ENCODE measurements at regions of chr7 and their contacts with region 1.

Region 1: DNA sequence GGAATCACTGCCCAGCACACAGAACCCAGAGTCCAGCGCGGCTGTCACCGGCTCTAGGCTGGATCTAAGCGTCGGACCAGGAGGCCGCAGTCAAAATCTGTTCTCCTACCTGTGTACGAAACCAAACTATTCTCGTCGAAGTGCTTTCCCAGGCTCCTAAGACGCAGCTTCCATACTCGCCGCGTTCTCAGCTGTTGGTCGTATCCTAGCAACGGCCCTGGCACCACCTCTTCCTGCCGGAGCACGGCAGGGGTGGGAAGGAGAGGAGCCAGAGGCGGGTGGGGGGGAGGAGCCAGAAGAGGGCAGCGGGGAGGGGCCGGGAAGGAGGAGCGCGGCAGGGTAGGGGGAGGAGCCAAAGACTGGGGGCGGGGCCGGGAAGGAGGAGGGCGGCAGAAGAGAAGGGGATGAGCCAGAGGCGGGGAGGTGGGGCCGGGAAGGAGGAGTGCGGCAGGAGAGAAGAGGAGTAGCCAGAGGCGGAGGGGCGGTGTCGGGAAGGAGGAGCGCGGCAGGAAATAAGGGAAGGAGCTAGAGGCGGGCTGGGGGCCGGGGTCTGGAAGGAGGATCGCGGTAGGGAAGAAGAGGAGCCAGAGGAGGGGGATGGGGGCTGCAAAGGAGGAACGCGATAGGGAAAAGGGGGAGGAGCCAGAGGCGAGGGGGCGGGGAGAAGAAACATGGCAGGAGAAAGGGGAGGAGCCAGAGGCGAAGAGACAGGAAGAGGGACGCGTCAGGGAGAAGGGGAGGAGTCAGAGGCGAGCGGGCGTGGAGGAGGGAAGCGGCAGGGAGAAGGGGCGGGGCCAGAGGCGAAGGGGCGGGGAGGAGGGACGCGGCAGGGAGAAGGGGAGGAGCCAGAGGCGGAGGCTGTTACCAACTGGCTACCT is at the start of gene IQUB:
- DNase-seq: peak; percentile 82 to 97
- H3K4me3 ChIP-seq: peak within 1 kb of the TSS; percentile 96
- H3K27ac ChIP-seq: no peak within 1 kb of the TSS
- H3K4me1 ChIP-seq: peaks cover 23% of the 10 kb centered on the region
- H3K27me3 ChIP-seq: no peaks in the 10 kb centered on the region
- CTCF ChIP-seq: no peak
- total RNA-seq, gene IQUB: 0.33 and 0.98 TPM in 2 replicates

Region 2: GRCh38 chr7:123154231-123154860 is 380.3 kb before region 1 on chr7:
- CTCF ChIA-PET with region 1: no interaction called
- POLR2A ChIA-PET with region 1: no interaction called
- intact Hi-C with region 1: loop called (anchors 10 kb)
- DNase-seq: peak; percentile 65 to 73
- H3K4me3 ChIP-seq: no peak overlapping the region
- H3K27ac ChIP-seq: no peak overlapping the region
- H3K4me1 ChIP-seq: no peaks in the 10 kb centered on the region
- H3K27me3 ChIP-seq: no peaks in the 10 kb centered on the region
- CTCF ChIP-seq: peak; percentile 84

Region 3: DNA sequence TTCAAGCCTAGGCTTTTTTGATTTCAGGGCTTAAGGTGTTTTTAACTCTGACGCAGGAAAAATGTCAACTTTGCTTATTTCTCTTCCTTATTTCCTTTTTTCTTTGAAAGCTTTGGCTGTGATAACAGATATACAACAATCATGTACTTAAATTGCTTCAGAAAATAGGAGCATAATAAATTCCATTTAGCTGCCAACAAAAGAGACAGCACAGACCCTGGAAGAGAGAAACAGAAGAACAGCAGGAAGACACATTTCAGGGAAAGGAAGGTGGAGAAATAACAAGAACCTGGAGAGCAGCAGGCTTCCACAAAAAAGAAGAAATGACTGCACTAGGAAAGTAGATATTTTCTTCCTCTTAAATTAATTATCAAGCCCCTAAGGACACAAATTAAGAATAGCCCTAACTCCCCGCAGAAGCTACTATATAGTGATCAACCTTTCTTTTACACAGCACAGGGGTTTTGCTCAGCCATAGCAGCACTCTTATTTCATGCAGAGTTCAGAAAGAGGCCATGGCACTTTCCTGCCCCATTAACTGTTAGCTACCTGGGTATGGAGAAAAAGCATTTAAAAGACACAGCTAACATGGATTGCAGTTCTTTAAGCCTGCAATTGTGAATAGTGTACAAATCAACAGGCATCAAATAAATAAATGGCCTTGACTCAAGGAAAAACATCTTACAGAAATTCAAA is 61.7 kb before region 1 on chr7:
- CTCF ChIA-PET with region 1: no interaction called
- POLR2A ChIA-PET with region 1: no interaction called
- intact Hi-C with region 1: no loop called
- DNase-seq: no peak
- H3K4me3 ChIP-seq: no peak overlapping the region
- H3K27ac ChIP-seq: no peak overlapping the region
- H3K4me1 ChIP-seq: 0 out of 2 replicates have a peak, but pooled peaks cover 4% of the 10 kb centered on the region
- H3K27me3 ChIP-seq: no peaks in the 10 kb centered on the region
- CTCF ChIP-seq: no peak

Region 4: GRCh38 chr7:123557398-123558288 is 23.0 kb after region 1 on chr7 and contains the start of gene NDUFA5:
- CTCF ChIA-PET with region 1: no interaction called
- POLR2A ChIA-PET with region 1: interaction called, 20 read pairs
- intact Hi-C with region 1: loop called (anchors 1 kb)
- DNase-seq: peak; percentile 91 to 98
- H3K4me3 ChIP-seq: peak within 1 kb of the TSS; percentile 82
- H3K27ac ChIP-seq: peak within 1 kb of the TSS; percentile 31; the same call in 1 of the 2 replicates
- H3K4me1 ChIP-seq: peaks cover 10% of the 10 kb centered on the region; the same call in 1 of the 2 replicates
- H3K27me3 ChIP-seq: no peaks in the 10 kb centered on the region
- CTCF ChIP-seq: no peak
- total RNA-seq, gene NDUFA5: 57.0 and 75.9 TPM in 2 replicates

Region 5: GRCh38 chr7:123748734-123749536 is 214.3 kb after region 1 on chr7 and contains the start of gene WASL:
- CTCF ChIA-PET with region 1: no interaction called
- POLR2A ChIA-PET with region 1: no interaction called
- intact Hi-C with region 1: loop called (anchors 5 kb)
- DNase-seq: peak; percentile 66 to 95
- H3K4me3 ChIP-seq: peak within 1 kb of the TSS; percentile 89
- H3K27ac ChIP-seq: peak within 1 kb of the TSS; percentile 93
- H3K4me1 ChIP-seq: peaks cover 40% of the 10 kb centered on the region
- H3K27me3 ChIP-seq: no peaks in the 10 kb centered on the region
- CTCF ChIP-seq: peak; percentile 40
- total RNA-seq, gene WASL: 31.4 and 40.3 TPM in 2 replicates

Measured in PC-9 (cell line).